H1 (cell line): ENCODE measurements at regions of chr19 and their contacts with region 1.

Region 1: GRCh38 chr19:45886427-45887199 is 672 bp upstream of the IRF2BP1 start:
- DNase-seq: peak in 1 of 2 experiments; percentile 93
- H3K4me3 ChIP-seq: peak overlapping the region; percentile 71 to 80 (median 78)
- H3K27ac ChIP-seq: peak overlapping the region; percentile 86
- H3K4me1 ChIP-seq: peaks cover 5 to 22% (median 14%) of the 10 kb centered on the region in 4 experiments
- H3K27me3 ChIP-seq: no peaks in the 10 kb centered on the region
- CTCF ChIP-seq: no peak
- EP300 ChIP-seq: no peak; a peak in 1 of 3 replicates
- POLR2A ChIP-seq: peak; percentile 68 to 70; a peak in 2 of 3 replicates
- RAD21 ChIP-seq: no peak

Region 2: GRCh38 chr19:45485305-45486077 is 401.1 kb before region 1 on chr19:
- CTCF ChIA-PET with region 1: no interaction called
- POLR2A ChIA-PET with region 1: no interaction called
- DNase-seq: peak in 1 of 2 experiments; percentile 100
- H3K4me3 ChIP-seq: peak overlapping the region; percentile 32 to 69 (median 52)
- H3K27ac ChIP-seq: no peak overlapping the region; the same call in 1 of the 2 replicates
- H3K4me1 ChIP-seq: peaks cover 0 to 3% (median 0%) of the 10 kb centered on the region in 4 experiments; a peak in 1 of 7 replicates
- H3K27me3 ChIP-seq: no peaks in the 10 kb centered on the region
- CTCF ChIP-seq: peak; percentile 86 to 95 (median 92)
- EP300 ChIP-seq: no peak
- POLR2A ChIP-seq: no peak
- RAD21 ChIP-seq: peak; percentile 59 to 66

Region 3: DNA sequence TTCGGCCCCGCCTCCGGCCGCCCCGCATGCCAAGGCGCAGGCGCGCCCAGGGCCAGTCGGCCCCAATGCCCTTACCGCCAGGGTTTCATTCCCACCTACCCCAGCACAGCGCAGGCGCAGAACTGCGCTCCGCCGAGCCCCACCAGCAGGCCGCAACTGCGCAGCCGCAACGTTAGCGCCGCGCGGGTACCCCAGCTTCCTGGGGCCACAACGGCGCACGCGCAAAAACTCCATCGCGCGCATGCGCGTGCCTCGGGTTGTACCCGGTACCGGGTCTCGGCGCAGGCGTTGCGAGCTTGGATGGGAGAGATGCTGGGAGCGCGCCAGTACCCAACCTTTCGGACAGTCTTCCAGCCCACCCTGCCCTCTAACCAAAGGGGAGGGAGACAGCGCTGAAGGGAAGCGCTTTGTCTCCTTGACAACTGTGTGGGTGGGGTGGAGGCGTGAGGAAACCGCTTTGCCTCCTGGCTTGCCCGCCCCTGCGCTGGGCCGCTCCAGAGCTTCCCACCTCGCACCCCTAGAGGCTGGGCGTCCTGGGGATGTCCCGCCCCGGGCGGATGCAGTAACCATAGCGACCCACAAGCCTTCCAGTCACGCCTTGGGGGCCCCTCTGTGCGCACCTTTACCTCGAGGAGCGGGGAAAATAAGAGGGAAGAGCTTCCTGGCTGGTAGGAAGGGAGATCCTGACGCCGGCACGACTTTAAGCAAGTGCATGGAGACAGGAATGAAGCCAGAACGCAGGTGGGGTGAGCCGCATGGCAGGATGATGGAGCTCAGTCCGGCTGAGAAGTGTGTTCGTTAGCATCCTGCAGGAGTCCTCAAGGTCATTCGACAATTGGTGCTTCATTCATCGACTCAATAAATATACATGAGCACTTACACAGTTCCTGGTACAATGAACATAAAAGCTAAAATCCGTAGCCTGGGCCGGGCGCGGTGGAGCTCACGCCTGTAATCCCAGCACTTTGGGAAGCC is 16.3 kb after region 1 on chr19:
- CTCF ChIA-PET with region 1: interaction called, 11 read pairs
- POLR2A ChIA-PET with region 1: interaction called, 21 read pairs
- DNase-seq: peak; percentile 95 to 100
- H3K4me3 ChIP-seq: peak overlapping the region; percentile 48 to 76 (median 72)
- H3K27ac ChIP-seq: peak overlapping the region; percentile 43; the same call in 1 of the 2 replicates
- H3K4me1 ChIP-seq: peaks cover 0 to 2% (median under 1%) of the 10 kb centered on the region in 4 experiments; a peak in 3 of 7 replicates
- H3K27me3 ChIP-seq: peaks cover 0 to 16% (median 11%) of the 10 kb centered on the region in 4 experiments; a peak in 6 of 7 replicates
- CTCF ChIP-seq: no peak
- EP300 ChIP-seq: no peak
- POLR2A ChIP-seq: no peak; a peak in 1 of 3 replicates
- RAD21 ChIP-seq: no peak

Region 4: GRCh38 chr19:46088101-46088500 is 201.5 kb after region 1 on chr19:
- CTCF ChIA-PET with region 1: no interaction called
- POLR2A ChIA-PET with region 1: no interaction called
- DNase-seq: no peak
- H3K4me3 ChIP-seq: no peak overlapping the region
- H3K27ac ChIP-seq: no peak overlapping the region
- H3K4me1 ChIP-seq: no peaks in the 10 kb centered on the region
- H3K27me3 ChIP-seq: no peaks in the 10 kb centered on the region
- CTCF ChIP-seq: no peak
- EP300 ChIP-seq: no peak
- POLR2A ChIP-seq: no peak
- RAD21 ChIP-seq: no peak